Activated CD4-positive, alpha-beta memory T cell treated with anti-CD3 and anti-CD28 coated beads for 36 hours (primary cell): ENCODE measurements at regions of chrX and their contacts with region 1.

Region 1: DNA sequence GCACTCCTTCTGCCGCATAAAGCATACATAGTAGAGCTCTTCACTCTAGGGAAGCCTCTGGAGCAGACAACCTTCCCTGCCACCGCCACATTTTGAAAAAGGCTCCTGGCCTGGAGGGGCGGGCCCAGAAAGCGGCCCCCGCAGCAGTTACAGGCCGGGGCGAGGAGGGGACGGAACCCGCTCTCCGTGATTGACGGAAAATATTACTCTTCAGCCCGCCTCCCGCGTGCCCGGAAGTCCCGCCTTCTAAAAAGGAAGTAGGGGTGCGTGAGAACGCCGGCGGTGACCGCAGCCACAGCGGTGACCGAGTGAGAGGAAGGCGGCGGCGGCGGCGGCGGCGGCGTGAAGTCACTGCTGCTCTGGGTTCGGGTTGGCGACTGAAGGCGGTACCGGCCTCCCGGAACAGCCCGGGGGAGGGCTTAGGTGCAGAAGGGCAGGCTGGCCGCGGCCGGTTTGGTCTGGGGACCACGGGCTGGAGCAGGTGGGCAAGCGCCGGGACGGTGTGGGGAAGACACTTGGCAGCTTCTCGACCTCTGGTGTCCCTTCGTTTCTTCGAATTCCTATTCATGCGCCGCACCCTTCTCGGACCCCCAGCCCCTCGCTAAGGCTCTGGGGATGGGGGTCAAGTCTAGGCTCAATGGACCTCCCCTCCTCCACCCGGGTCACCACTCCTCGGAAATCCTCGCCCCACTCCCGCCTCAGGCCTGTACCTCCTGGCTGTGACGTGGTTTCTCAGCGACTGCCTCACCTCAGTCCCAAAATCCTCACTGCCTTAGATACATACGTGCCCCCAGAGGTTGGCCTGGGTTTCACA is at the start of gene HCCS:
- DNase-seq: peak; percentile 90
- H3K4me3 Mint-ChIP-seq: no peak within 1 kb of the TSS
- H3K27ac Mint-ChIP-seq: peak within 1 kb of the TSS; percentile 95
- H3K4me1 Mint-ChIP-seq: peaks cover 16% of the 10 kb centered on the region
- H3K27me3 Mint-ChIP-seq: no peaks in the 10 kb centered on the region
- total RNA-seq, gene HCCS: 23.5 to 26.8 TPM

Region 2: DNA sequence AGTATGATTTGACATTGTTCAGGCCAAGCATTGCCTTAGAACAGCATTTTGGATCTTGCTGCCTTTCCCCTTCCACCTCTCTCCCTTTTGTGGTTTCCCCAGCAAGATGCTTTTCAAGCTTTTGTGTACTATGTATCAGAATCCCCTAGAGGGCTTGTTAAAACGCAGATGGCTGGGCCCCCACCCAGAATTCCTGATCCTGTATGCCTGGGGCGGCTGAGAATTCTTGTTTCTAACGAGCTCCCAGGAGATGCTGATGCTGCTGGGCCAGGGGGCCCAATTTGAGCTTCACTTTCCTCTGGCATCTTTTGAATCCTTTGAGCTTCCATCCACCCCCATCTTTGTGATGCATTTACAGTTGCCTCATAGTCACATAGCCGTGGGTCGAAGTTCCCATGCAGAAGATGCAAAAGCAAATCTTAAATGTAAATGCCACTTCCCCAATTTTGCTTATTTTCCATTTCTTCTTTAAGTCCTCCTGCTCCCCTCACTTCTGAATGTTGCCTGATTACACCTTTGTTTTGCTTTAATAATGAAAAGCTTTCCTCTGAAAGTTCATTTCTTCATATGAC is 18.4 kb after region 1 on chrX:
- CTCF ChIA-PET with region 1: no interaction called
- POLR2A ChIA-PET with region 1: no interaction called
- intact Hi-C with region 1: no loop called
- DNase-seq: no peak
- H3K4me3 Mint-ChIP-seq: no peak overlapping the region
- H3K27ac Mint-ChIP-seq: no peak overlapping the region
- H3K4me1 Mint-ChIP-seq: no peaks in the 10 kb centered on the region
- H3K27me3 Mint-ChIP-seq: no peaks in the 10 kb centered on the region

Region 3: GRCh38 chrX:11758400-11759171 is 647.3 kb after region 1 on chrX:
- CTCF ChIA-PET with region 1: no interaction called
- POLR2A ChIA-PET with region 1: no interaction called
- intact Hi-C with region 1: loop called (anchors 10 kb)
- DNase-seq: peak; percentile 92
- H3K4me3 Mint-ChIP-seq: peak overlapping the region; percentile 95
- H3K27ac Mint-ChIP-seq: peak overlapping the region; percentile 99
- H3K4me1 Mint-ChIP-seq: peaks cover 23% of the 10 kb centered on the region
- H3K27me3 Mint-ChIP-seq: peaks cover under 1% of the 10 kb centered on the region